Panc1 (cell line): ENCODE measurements at regions of chr5 and their contacts with region 1.

Region 1: DNA sequence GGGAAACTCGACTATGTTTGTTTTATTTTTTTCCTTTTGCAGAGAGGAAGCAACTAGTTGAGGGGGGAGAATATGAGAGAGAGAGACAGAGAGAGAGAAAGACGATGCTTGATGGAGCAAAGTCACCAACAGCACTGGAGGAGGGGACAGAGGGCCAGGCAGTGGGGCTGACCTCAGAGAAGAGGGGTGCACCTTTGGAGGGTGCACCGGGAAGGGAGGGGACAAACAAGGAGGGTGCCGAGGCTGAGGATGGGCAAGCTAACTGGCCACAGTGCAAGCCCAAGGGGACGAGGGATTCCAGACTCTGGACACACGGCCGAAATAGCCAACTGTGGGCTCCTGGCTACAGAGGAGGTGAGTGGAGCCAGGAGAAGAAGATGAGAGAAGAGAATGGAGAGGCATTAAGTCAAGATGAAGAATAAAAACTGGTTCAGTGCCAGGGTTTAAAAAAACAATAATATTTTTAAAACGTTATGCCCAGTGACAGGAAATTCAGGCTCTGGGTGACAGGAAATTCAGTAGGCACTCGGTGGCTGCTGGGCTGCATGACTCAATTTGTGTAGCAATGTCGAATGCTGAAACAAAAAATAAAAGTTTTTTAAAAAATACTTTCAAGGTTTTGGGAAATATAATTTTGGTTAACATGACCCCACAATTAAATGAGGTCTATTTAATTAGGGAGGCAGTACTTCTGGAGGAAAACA is 13.3 kb upstream of the GLRX start:
- DNase-seq: no peak
- ATAC-seq: no peak
- H3K4me3 ChIP-seq: no peak overlapping the region
- H3K27ac ChIP-seq: no peak overlapping the region; the same call in 1 of the 2 replicates
- H3K4me1 ChIP-seq: peaks cover 5% of the 10 kb centered on the region
- H3K27me3 ChIP-seq: no peaks in the 10 kb centered on the region
- CTCF ChIP-seq: no peak

Region 2: DNA sequence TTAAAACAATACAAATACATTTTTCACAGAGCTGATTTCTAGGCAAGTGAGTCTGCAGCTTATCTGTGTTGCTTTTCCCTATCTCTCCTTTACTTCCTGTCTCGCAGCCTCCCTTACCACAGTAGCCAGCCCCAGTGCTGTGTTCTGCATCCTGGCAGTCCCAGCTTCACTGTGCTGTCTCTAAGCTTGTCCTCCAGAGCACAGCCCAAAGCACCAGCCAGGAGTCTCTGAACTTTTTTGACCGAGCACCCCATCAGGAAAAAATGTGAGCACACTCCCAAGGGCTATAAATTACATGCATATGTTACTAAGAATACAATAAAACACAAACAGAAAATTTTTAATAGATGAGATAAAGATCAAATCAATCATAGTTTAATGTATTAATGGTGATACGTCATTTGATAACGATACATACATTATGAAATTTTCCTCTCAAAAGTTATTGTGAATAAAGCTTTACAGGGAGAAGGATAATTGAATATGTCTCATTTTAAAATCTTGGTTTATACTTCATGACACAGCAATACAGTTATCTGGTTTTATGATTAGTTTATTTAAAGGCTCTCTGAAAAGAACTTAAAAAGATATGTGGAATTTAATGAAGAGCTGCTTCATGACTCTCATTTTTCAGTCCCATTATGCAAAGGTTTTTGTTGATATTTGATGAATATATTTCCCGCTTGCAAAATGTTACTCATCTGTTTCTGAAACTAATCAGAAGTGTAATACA is 112.0 kb before region 1 on chr5:
- CTCF ChIA-PET with region 1: no interaction called
- POLR2A ChIA-PET with region 1: interaction called, 16 read pairs
- in situ Hi-C with region 1: no loop called
- intact Hi-C with region 1: no loop called
- DNase-seq: no peak
- ATAC-seq: peak; percentile 91
- H3K4me3 ChIP-seq: no peak overlapping the region
- H3K27ac ChIP-seq: peak overlapping the region; percentile 24; the same call in 1 of the 2 replicates
- H3K4me1 ChIP-seq: peaks cover 37% of the 10 kb centered on the region
- H3K27me3 ChIP-seq: no peaks in the 10 kb centered on the region
- CTCF ChIP-seq: no peak

Region 3: DNA sequence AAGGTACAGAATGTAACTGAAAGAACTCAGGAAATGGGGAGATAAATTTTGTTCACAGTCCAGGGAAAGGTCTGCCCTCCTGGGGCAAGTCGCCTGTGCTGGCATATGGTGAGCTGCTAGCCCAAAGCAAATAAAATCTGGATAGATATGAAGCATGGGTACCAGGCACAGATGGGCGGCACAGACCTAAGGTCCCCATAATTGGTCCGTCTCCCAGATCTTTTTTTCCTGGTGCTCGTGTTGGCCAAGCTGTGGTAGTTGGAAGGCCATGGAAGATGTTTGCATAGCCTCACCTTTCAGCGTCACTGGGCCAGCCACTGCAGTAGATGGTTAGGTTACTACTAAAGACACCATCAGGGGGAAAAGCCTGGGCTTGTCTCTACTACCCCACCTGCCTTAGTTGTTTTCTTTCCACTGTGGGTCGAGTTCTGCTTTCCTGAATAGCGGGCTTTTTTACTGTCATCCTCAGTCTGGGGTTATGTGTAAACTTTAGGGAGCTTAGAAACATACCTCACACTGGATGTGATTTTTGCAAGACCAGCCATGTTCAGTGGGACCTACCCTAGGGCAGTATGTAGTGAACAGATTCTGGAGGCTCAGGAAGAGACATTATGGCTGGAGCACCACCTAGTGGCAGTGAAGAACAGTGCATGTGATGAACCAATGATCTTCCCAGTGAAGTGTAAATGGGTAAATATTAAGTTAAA is 10.9 kb after region 1 on chr5:
- CTCF ChIA-PET with region 1: interaction called, 11 read pairs
- POLR2A ChIA-PET with region 1: no interaction called
- in situ Hi-C with region 1: no loop called
- intact Hi-C with region 1: no loop called
- DNase-seq: no peak
- ATAC-seq: peak; percentile 91
- H3K4me3 ChIP-seq: no peak overlapping the region
- H3K27ac ChIP-seq: no peak overlapping the region
- H3K4me1 ChIP-seq: no peaks in the 10 kb centered on the region
- H3K27me3 ChIP-seq: no peaks in the 10 kb centered on the region; the same call in 1 of the 2 replicates
- CTCF ChIP-seq: peak; percentile 93